ENCODE measurements at regions of chr6 and their contacts with region 1.

Region 1: GRCh38 chr6:87154993-87155841 is at the start of gene ZNF292:
- DNase-seq: peak; percentile 91 to 95
- ATAC-seq: peak; percentile 80
- H3K4me3 ChIP-seq: peak within 1 kb of the TSS; percentile 83 to 98 (median 92)
- H3K27ac ChIP-seq: peak within 1 kb of the TSS; percentile 96 to 98 (median 96)
- H3K4me1 ChIP-seq: peaks cover 44 to 57% of the 10 kb centered on the region in 2 donors
- H3K27me3 ChIP-seq: no peaks in the 10 kb centered on the region
- CTCF ChIP-seq: peak in 3 of 5 experiments; percentile 14 to 43 (median 31)
- POLR2A ChIP-seq: peak; percentile 69 to 71
- total RNA-seq, gene ZNF292: 10.7 to 21.7 (median 11.5) TPM

Region 2: GRCh38 chr6:87200469-87201174 is 45.4 kb after region 1 on chr6:
- in situ Hi-C with region 1: no loop called
- intact Hi-C with region 1: loop called (anchors 1 kb)
- DNase-seq: no peak
- ATAC-seq: no peak
- H3K4me3 ChIP-seq: no peak overlapping the region
- H3K27ac ChIP-seq: no peak overlapping the region
- H3K4me1 ChIP-seq: peaks cover 23 to 25% of the 10 kb centered on the region in 2 donors
- H3K27me3 ChIP-seq: no peaks in the 10 kb centered on the region
- CTCF ChIP-seq: no peak
- POLR2A ChIP-seq: no peak

Region 3: DNA sequence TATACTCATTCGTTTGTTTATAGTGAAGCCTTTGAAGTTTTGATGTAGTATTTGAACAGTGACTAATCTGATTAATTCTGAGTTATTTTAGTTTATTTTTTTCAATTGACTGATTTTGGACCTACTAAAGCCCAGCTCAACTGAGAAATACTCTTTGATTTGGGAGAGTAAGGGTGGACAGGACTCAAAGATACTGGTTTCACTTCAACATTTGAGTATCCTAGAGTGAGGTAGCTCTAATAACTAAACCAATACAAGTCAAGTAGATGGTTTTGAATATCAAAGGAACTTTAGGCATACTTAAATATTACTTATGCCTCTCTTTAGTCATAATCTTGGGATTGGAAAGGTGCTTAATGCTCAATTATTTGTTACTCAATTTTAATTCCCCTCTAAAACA is 65.8 kb after region 1 on chr6:
- in situ Hi-C with region 1: no loop called
- intact Hi-C with region 1: no loop called
- DNase-seq: no peak
- ATAC-seq: no peak
- H3K4me3 ChIP-seq: no peak overlapping the region
- H3K27ac ChIP-seq: no peak overlapping the region
- H3K4me1 ChIP-seq: no peaks in the 10 kb centered on the region
- H3K27me3 ChIP-seq: no peaks in the 10 kb centered on the region
- CTCF ChIP-seq: no peak
- POLR2A ChIP-seq: no peak

Region 4: GRCh38 chr6:87322304-87323212 is 167.3 kb after region 1 on chr6 and contains the start of gene SMIM8:
- in situ Hi-C with region 1: no loop called
- intact Hi-C with region 1: loop called (anchors 5 kb)
- DNase-seq: peak; percentile 65 to 76
- ATAC-seq: peak; percentile 95 to 97
- H3K4me3 ChIP-seq: peak within 1 kb of the TSS; percentile 81 to 98 (median 90)
- H3K27ac ChIP-seq: peak within 1 kb of the TSS; percentile 82 to 90 (median 85)
- H3K4me1 ChIP-seq: peaks cover 0 to 3% of the 10 kb centered on the region in 2 donors
- H3K27me3 ChIP-seq: no peaks in the 10 kb centered on the region
- CTCF ChIP-seq: peak; percentile 87 to 99 (median 95)
- POLR2A ChIP-seq: peak in 1 of 2 donors; percentile 14
- total RNA-seq, gene SMIM8: 2.8 to 17.7 (median 6.9) TPM

Region 5: GRCh38 chr6:87472525-87473418 is 317.6 kb after region 1 on chr6 and contains the start of gene SLC35A1:
- in situ Hi-C with region 1: no loop called
- intact Hi-C with region 1: loop called (anchors 5 kb)
- DNase-seq: peak; percentile 70 to 77
- ATAC-seq: peak; percentile 95 to 96
- H3K4me3 ChIP-seq: peak within 1 kb of the TSS; percentile 74 to 100 (median 90)
- H3K27ac ChIP-seq: peak within 1 kb of the TSS; percentile 89 to 98 (median 94)
- H3K4me1 ChIP-seq: peaks cover 7% of the 10 kb centered on the region in 2 donors
- H3K27me3 ChIP-seq: no peaks in the 10 kb centered on the region
- CTCF ChIP-seq: peak in 4 of 5 experiments; percentile 14 to 58 (median 33)
- POLR2A ChIP-seq: peak; percentile 60 to 61
- total RNA-seq, gene SLC35A1: 6.7 to 19.2 (median 11.2) TPM

Region 6: GRCh38 chr6:87968435-87969278 is 813.4 kb after region 1 on chr6:
- in situ Hi-C with region 1: no loop called
- intact Hi-C with region 1: no loop called
- DNase-seq: no peak
- ATAC-seq: no peak
- H3K4me3 ChIP-seq: peak overlapping the region; percentile 29 to 42 (median 33)
- H3K27ac ChIP-seq: no peak overlapping the region
- H3K4me1 ChIP-seq: no peaks in the 10 kb centered on the region
- H3K27me3 ChIP-seq: peaks cover 13 to 19% (median 15%) of the 10 kb centered on the region in 3 donors
- CTCF ChIP-seq: no peak
- POLR2A ChIP-seq: no peak

Region 7: DNA sequence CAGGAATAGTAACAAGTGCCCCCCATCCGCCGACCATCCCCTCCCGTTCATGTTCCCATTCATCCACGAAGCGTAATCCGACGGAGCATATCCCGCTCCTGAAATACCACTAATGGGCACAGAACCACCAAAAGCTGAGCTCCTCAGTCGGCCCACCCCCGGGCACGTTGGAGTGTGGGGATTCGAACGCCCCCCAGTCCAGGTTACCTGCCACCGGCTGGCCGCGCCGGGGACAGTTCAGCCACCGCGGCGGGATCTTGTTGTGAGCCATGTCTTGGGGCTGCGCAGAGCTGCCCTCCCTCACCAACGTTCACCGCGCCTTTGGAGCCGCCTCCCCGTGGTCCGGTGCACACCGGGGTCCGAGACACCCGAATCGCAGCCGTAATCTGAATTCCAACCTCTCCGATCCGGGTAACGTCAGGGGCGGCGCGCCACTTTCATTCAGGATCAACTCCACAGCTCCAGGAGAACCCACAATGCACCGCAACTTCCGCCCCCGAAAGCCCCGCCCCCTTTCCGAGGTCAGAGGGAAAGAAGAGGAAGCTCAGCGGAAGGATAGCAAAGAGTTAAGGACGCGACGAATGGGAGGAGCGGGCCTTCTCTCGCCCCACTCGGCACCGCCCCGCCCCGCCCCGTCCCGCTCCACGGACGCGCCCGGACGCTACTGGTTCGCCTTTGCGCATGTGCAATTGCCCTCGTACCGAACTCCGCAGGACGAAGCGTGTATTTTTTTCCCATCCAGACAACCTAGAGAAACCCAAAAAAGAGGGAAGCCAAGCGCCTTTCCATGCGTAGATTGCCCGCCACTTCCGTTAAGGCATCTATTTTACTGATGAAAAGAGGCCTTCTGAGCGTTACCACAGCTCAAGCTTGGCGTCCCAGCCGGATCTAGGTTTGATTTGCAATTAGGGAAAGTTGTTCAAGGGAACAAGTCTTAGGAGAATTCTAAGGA is 1808.2 kb after region 1 on chr6 and contains the start of gene RNGTT:
- in situ Hi-C with region 1: no loop called
- intact Hi-C with region 1: loop called (anchors 10 kb)
- DNase-seq: peak; percentile 97 to 98
- ATAC-seq: peak; percentile 99 to 100
- H3K4me3 ChIP-seq: peak within 1 kb of the TSS; percentile 86 to 97 (median 92)
- H3K27ac ChIP-seq: peak within 1 kb of the TSS; percentile 86 to 90 (median 90)
- H3K4me1 ChIP-seq: peaks cover 15 to 17% of the 10 kb centered on the region in 2 donors
- H3K27me3 ChIP-seq: no peaks in the 10 kb centered on the region
- CTCF ChIP-seq: no peak
- POLR2A ChIP-seq: peak; percentile 23 to 46
- total RNA-seq, gene RNGTT: 4.9 to 11.3 (median 8.2) TPM

Measured in gastrocnemius medialis (tissue), 4 donors.